Activated T-helper 2 cell treated with anti-CD3 and anti-CD28 coated beads, Interferon-gamma antibody, Interleukin-2, Interleukin-4, amounts not matched to agents 10 μg/mL and 5 μg/mL and 100 μg/mL, durations not matched to agents 14 hours and 24 hours and 36 hours (primary cell): ENCODE measurements at regions of chr2 and their contacts with region 1.

Region 1: GRCh38 chr2:157492189-157492773 is 48.4 kb upstream of the CYTIP start:
- DNase-seq: peak; percentile 56
- H3K4me3 Mint-ChIP-seq: no peak overlapping the region
- H3K27ac Mint-ChIP-seq: no peak overlapping the region
- H3K4me1 Mint-ChIP-seq: peaks cover 47% of the 10 kb centered on the region
- H3K27me3 Mint-ChIP-seq: no peaks in the 10 kb centered on the region

Region 2: GRCh38 chr2:157596992-157597681 is 104.9 kb after region 1 on chr2:
- intact Hi-C with region 1: loop called (anchors 1 kb)
- DNase-seq: peak; percentile 20
- H3K4me3 Mint-ChIP-seq: peak overlapping the region; percentile 39
- H3K27ac Mint-ChIP-seq: no peak overlapping the region
- H3K4me1 Mint-ChIP-seq: peaks cover 6% of the 10 kb centered on the region
- H3K27me3 Mint-ChIP-seq: peaks cover 47% of the 10 kb centered on the region

Region 3: GRCh38 chr2:157751462-157752058 is 259.3 kb after region 1 on chr2:
- intact Hi-C with region 1: loop called (anchors 5 kb)
- DNase-seq: no peak
- H3K4me3 Mint-ChIP-seq: no peak overlapping the region
- H3K27ac Mint-ChIP-seq: no peak overlapping the region
- H3K4me1 Mint-ChIP-seq: peaks cover 30% of the 10 kb centered on the region
- H3K27me3 Mint-ChIP-seq: no peaks in the 10 kb centered on the region